Activated T-helper 1 cell treated with anti-CD3 and anti-CD28 coated beads, Interleukin-12 subunit alpha, Interleukin-12 subunit beta, Interleukin-2, Interleukin-4 antibody, amounts not matched to agents 30 ng/mL and 10 ng/mL and 1 ng/mL, durations not matched to agents 14 hours and 24 hours and 36 hours (primary cell): ENCODE measurements at regions of chr2 and their contacts with region 1.

Region 1: GRCh38 chr2:120312861-120313694 is 32.9 kb upstream of the INHBB start:
- DNase-seq: peak; percentile 64
- H3K4me3 Mint-ChIP-seq: peak overlapping the region; percentile 77
- H3K27ac Mint-ChIP-seq: peak overlapping the region; percentile 4
- H3K4me1 Mint-ChIP-seq: peaks cover 42% of the 10 kb centered on the region
- H3K27me3 Mint-ChIP-seq: peaks cover under 1% of the 10 kb centered on the region

Region 2: GRCh38 chr2:119678998-119679710 is 633.9 kb before region 1 on chr2 and contains the start of gene TMEM177:
- intact Hi-C with region 1: loop called (anchors 10 kb)
- DNase-seq: peak; percentile 90
- H3K4me3 Mint-ChIP-seq: peak within 1 kb of the TSS; percentile 96
- H3K27ac Mint-ChIP-seq: peak within 1 kb of the TSS; percentile 85
- H3K4me1 Mint-ChIP-seq: peaks cover 25% of the 10 kb centered on the region
- H3K27me3 Mint-ChIP-seq: peaks cover 4% of the 10 kb centered on the region
- total RNA-seq, gene TMEM177: 16.6 and 17.4 TPM in 2 replicates

Region 3: DNA sequence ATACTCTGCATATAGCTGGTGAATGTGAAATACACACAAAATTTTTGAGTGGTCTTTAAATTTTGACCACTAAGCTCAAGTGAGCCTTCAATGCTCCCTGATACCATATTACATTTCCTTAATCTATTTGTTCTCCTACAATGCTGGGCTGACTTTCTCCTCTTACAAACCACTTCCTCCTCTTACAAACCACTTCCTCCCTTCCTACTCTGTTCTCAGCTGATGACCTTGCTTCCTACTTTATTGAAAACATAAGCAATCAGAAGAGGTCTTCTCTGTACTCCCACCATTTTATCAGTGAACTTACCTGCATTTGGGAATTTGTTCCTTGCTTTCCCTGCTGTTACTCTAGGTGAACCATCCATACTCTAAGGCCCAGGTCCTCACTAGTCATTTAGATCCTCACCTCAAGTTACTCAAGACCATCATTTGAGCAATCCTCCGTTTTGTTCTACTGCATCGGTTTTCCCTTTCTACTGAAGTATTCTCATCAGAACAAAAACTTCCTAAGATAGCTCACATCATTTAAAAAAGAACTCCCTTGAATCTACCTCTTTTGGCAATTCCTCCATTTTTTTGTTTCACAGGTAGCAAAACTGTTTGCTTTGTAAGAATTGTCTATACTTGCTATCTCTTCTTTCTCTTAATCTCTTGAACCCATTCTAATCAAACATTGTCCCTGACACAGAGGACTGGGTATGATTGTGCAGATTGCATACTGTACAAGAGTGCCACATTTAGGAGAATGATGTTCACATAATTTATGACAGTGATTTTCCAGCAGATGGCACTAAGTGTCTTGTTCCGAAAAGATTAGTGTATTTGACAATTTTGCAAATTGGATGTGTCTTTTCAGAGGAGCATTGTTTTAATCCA is 203.7 kb before region 1 on chr2:
- intact Hi-C with region 1: loop called (anchors 1 kb)
- DNase-seq: peak; percentile 13
- H3K4me3 Mint-ChIP-seq: peak overlapping the region; percentile 29
- H3K27ac Mint-ChIP-seq: no peak overlapping the region
- H3K4me1 Mint-ChIP-seq: peaks cover 16% of the 10 kb centered on the region
- H3K27me3 Mint-ChIP-seq: peaks cover 14% of the 10 kb centered on the region

Region 4: GRCh38 chr2:120223034-120223912 is 89.8 kb before region 1 on chr2 and contains the start of gene TMEM185B:
- intact Hi-C with region 1: loop called (anchors 1 kb)
- DNase-seq: peak; percentile 90
- H3K4me3 Mint-ChIP-seq: peak within 1 kb of the TSS; percentile 86
- H3K27ac Mint-ChIP-seq: peak within 1 kb of the TSS; percentile 92
- H3K4me1 Mint-ChIP-seq: peaks cover 69% of the 10 kb centered on the region
- H3K27me3 Mint-ChIP-seq: peaks cover 2% of the 10 kb centered on the region
- total RNA-seq, gene TMEM185B: 47.9 and 48.6 TPM in 2 replicates

Region 5: DNA sequence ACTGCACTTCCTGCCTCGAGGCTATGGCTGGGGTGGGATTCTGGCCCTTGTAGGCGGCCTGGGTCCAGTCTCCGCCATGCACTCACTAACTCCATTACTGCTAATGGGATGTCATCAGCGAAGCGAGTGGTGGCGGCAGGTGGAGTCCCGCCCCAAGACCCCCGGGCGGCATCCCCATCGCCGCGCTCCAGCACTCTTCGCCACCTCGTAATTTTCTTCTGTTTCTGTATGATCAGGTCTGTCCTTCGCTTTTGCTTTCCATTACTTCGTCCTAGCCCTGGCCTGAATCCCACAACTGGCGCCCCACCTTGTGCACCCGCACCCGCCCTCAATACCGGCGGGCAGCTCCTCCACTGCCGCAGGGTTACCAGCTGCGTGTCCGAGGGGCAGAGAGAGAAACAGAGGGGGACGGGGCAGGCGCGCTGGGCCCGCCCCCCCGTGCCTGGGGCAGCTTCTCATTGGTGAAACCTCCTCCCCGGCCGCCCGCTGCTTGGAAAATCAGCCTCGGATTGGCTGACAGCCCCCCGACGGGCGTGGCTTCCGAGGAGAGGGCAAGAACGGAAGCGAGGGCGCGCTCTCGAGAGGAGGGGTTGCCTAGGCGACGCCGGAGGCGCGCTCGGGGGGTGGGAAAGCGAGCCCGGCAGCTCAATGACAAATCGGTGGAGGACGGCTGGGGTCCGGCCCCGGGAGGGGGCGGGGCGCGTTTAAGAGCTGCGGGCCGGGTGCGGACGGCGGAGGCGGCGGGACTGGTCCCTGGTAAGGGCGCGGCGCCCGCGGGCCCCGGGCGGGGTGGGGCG is 60.7 kb before region 1 on chr2 and contains the start of gene RALB:
- intact Hi-C with region 1: loop called (anchors 1 kb)
- DNase-seq: peak; percentile 99
- H3K4me3 Mint-ChIP-seq: peak within 1 kb of the TSS; percentile 98
- H3K27ac Mint-ChIP-seq: peak within 1 kb of the TSS; percentile 95
- H3K4me1 Mint-ChIP-seq: peaks cover 85% of the 10 kb centered on the region
- H3K27me3 Mint-ChIP-seq: peaks cover 10% of the 10 kb centered on the region
- total RNA-seq, gene RALB: 79.7 and 84.2 TPM in 2 replicates

Region 6: DNA sequence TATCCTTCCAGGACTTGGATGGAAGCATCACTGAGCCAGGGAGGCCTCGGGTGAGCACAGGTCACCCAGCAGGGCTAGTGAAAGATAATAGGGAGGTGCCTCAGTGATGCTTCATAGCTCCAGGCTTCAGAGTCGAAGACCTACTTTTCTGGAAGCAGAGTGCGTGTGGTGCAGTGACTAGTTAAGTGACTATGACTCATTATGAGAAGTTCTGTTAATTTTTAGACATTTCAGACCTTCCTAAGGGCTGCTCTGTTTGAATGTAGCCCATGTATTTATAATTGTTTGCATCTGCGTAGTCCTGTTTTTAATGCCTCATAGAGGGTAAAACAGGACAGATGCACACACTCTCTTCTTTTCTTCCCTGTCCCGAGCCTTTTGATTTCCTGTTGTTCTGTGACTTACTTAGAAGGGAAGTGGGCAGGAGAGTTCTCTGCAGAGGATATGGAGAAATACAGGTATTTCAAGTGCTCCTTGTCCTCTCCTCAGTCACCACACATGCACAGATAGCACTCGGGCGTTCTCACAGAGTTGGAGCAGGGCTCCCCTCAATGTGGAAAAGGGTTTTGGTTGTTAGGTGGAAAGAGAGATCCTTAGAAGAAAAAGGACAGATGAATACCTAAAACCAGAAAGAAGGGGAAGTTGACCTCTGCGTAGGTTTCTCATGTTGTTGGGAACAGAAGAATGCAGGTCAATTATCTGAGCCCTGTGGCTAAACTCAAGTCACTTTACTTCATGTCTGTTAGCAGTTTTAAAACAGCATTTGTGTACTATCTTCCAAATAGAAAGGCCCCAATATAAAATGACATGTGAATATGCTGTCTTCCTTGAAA is 25.7 kb before region 1 on chr2:
- intact Hi-C with region 1: no loop called
- DNase-seq: no peak
- H3K4me3 Mint-ChIP-seq: peak overlapping the region; percentile 30
- H3K27ac Mint-ChIP-seq: peak overlapping the region; percentile 90
- H3K4me1 Mint-ChIP-seq: peaks cover 76% of the 10 kb centered on the region
- H3K27me3 Mint-ChIP-seq: no peaks in the 10 kb centered on the region